CD4-positive, alpha-beta memory T cell (primary cell): ENCODE measurements at regions of chr17 and their contacts with region 1.

Region 1: GRCh38 chr17:8222630-8223356 is 12.4 kb upstream of the AURKB start:
- DNase-seq: peak; percentile 88 to 91 (median 90)
- H3K4me3 ChIP-seq: peak overlapping the region; percentile 63 to 99
- H3K4me3 Mint-ChIP-seq: peak overlapping the region; percentile 93 to 98 (median 94)
- H3K27ac ChIP-seq: peak overlapping the region; percentile 89
- H3K27ac Mint-ChIP-seq: peak overlapping the region; percentile 97 to 100 (median 98)
- H3K4me1 ChIP-seq: peaks cover 51% of the 10 kb centered on the region
- H3K4me1 Mint-ChIP-seq: peaks cover 36 to 85% (median 69%) of the 10 kb centered on the region in 4 donors
- H3K27me3 ChIP-seq: no peaks in the 10 kb centered on the region
- H3K27me3 Mint-ChIP-seq: peaks cover 4 to 21% of the 10 kb centered on the region in 2 donors

Region 2: GRCh38 chr17:8118769-8119580 is 103.8 kb before region 1 on chr17:
- CTCF ChIA-PET with region 1: interaction called, 44 read pairs
- POLR2A ChIA-PET with region 1: interaction called, 152 read pairs
- intact Hi-C with region 1: loop called (anchors 1 kb)
- DNase-seq: peak; percentile 87 to 91 (median 88)
- H3K4me3 ChIP-seq: peak overlapping the region; percentile 69 to 97
- H3K4me3 Mint-ChIP-seq: peak overlapping the region; percentile 91 to 97 (median 94)
- H3K27ac ChIP-seq: peak overlapping the region; percentile 56
- H3K27ac Mint-ChIP-seq: peak overlapping the region; percentile 95 to 100 (median 98)
- H3K4me1 ChIP-seq: peaks cover 52% of the 10 kb centered on the region
- H3K4me1 Mint-ChIP-seq: peaks cover 34 to 63% (median 48%) of the 10 kb centered on the region in 4 donors
- H3K27me3 ChIP-seq: peaks cover 42% of the 10 kb centered on the region
- H3K27me3 Mint-ChIP-seq: peaks cover 27 to 59% of the 10 kb centered on the region in 2 donors

Region 3: GRCh38 chr17:8156246-8156992 is 66.4 kb before region 1 on chr17:
- CTCF ChIA-PET with region 1: interaction called, 12 read pairs
- POLR2A ChIA-PET with region 1: interaction called, 240 read pairs
- intact Hi-C with region 1: loop called (anchors 1 kb)
- DNase-seq: peak; percentile 100
- H3K4me3 ChIP-seq: peak overlapping the region; percentile 90
- H3K4me3 Mint-ChIP-seq: no peak overlapping the region
- H3K27ac ChIP-seq: peak overlapping the region; percentile 100
- H3K27ac Mint-ChIP-seq: no peak overlapping the region
- H3K4me1 ChIP-seq: peaks cover 85% of the 10 kb centered on the region
- H3K4me1 Mint-ChIP-seq: peaks cover 38 to 71% (median 55%) of the 10 kb centered on the region in 4 donors
- H3K27me3 ChIP-seq: no peaks in the 10 kb centered on the region
- H3K27me3 Mint-ChIP-seq: no peaks in the 10 kb centered on the region

Region 4: DNA sequence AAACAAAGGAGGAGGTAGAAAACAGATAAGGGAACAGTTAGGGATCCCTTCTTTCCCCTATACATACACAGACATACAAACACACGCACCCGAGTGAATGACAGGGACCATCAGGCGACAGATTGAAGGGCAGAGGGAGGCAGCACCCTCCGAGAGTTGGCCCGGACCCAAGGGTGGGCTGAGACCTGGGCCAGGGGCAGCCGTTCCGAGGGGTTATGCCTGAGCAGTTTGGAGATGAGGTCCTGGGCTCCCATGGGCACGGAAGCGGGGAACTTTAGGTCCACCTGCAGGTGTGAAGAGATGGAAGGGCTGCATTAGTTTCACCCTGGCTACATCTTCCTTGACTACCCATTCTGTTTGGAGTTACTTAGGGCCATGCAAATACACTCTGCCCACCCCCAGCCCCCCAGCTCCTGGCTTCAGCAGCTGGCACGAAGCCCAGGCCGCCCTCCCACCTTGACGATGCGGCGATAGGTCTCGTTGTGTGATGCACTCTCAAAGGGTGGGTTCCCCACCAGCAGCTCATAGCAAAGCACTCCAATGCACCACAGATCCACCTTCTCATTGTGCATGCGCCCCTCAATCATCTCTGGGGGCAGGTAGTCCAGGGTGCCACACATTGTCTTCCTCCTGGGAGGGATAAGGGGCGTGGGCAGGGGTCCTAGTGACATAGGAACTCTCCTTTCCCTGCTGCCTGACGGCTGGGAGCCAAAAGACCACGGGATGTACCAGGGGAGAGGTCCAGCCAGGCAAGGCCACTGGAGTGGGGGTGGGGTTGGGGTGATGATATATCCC is 17.8 kb before region 1 on chr17:
- CTCF ChIA-PET with region 1: interaction called, 8 read pairs
- POLR2A ChIA-PET with region 1: interaction called, 74 read pairs
- intact Hi-C with region 1: loop called (anchors 1 kb)
- DNase-seq: no peak
- H3K4me3 ChIP-seq: no peak overlapping the region
- H3K4me3 Mint-ChIP-seq: no peak overlapping the region
- H3K27ac ChIP-seq: no peak overlapping the region
- H3K27ac Mint-ChIP-seq: peak overlapping the region in 2 of 7 donors; percentile 9 to 43
- H3K4me1 ChIP-seq: peaks cover 9% of the 10 kb centered on the region
- H3K4me1 Mint-ChIP-seq: peaks cover 7 to 8% (median 7%) of the 10 kb centered on the region in 4 donors
- H3K27me3 ChIP-seq: no peaks in the 10 kb centered on the region
- H3K27me3 Mint-ChIP-seq: peaks cover 0 to 1% of the 10 kb centered on the region in 2 donors

Region 5: GRCh38 chr17:8243827-8244226 is 21.0 kb after region 1 on chr17:
- CTCF ChIA-PET with region 1: interaction called, 67 read pairs
- POLR2A ChIA-PET with region 1: interaction called, 611 read pairs
- intact Hi-C with region 1: loop called (anchors 1 kb)
- DNase-seq: peak in 4 of 5 donors; percentile 27 to 56 (median 30)
- H3K4me3 ChIP-seq: no peak overlapping the region
- H3K4me3 Mint-ChIP-seq: peak overlapping the region; percentile 41 to 82 (median 62)
- H3K27ac ChIP-seq: no peak overlapping the region
- H3K27ac Mint-ChIP-seq: peak overlapping the region; percentile 67 to 100 (median 90)
- H3K4me1 ChIP-seq: peaks cover 52% of the 10 kb centered on the region
- H3K4me1 Mint-ChIP-seq: peaks cover 37 to 69% (median 46%) of the 10 kb centered on the region in 4 donors
- H3K27me3 ChIP-seq: no peaks in the 10 kb centered on the region
- H3K27me3 Mint-ChIP-seq: peaks cover 0 to 5% of the 10 kb centered on the region in 2 donors

Region 6: GRCh38 chr17:8294814-8295316 is 72.1 kb after region 1 on chr17:
- CTCF ChIA-PET with region 1: interaction called, 38 read pairs
- POLR2A ChIA-PET with region 1: interaction called, 107 read pairs
- intact Hi-C with region 1: loop called (anchors 1 kb)
- DNase-seq: no peak
- H3K4me3 ChIP-seq: peak overlapping the region; percentile 78 to 92
- H3K4me3 Mint-ChIP-seq: peak overlapping the region; percentile 91 to 97 (median 94)
- H3K27ac ChIP-seq: peak overlapping the region; percentile 73
- H3K27ac Mint-ChIP-seq: peak overlapping the region; percentile 92 to 98 (median 96)
- H3K4me1 ChIP-seq: peaks cover 26% of the 10 kb centered on the region
- H3K4me1 Mint-ChIP-seq: peaks cover 18 to 50% (median 29%) of the 10 kb centered on the region in 4 donors
- H3K27me3 ChIP-seq: no peaks in the 10 kb centered on the region
- H3K27me3 Mint-ChIP-seq: no peaks in the 10 kb centered on the region